MCF 10A (cell line): ENCODE measurements at regions of chr4 and their contacts with region 1.

Region 1: GRCh38 chr4:138870737-138871554 is 144.6 kb upstream of the NOCT start:
- DNase-seq: peak; percentile 81
- H3K4me3 Mint-ChIP-seq: no peak overlapping the region
- H3K27ac Mint-ChIP-seq: no peak overlapping the region
- H3K4me1 Mint-ChIP-seq: peaks cover 11% of the 10 kb centered on the region
- H3K27me3 Mint-ChIP-seq: no peaks in the 10 kb centered on the region
- CTCF ChIP-seq: peak; percentile 78

Region 2: DNA sequence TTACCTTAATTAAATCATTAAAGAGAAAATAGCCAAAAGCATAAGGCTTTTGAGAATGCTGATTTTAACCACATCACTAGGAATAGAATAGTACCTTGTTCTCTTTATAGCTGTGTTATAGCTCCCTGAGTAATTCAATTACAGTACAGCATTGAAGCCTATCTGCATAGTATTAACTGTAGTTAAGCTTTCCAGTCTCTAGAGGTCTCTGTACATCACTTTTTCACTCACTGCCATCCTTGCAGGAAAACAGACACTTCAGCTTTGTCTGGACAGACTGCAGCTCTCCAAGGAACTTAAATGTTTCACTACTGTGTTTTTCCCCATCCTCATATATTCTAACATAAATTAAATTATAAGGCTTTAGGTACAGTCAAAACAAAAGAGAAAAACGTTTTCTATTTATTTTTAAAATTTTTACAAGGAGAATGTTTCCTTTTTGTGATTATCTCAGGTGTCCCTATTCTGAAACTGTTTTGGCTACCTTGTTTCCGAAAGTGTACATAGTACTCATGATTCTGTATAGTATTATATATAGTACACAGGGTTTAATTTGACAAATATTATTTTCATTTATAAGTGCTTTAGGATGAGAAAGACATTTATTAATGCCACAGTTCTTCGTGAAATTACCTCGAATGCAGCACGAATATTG is 1746.5 kb before region 1 on chr4:
- CTCF ChIA-PET with region 1: interaction called, 5 read pairs
- POLR2A ChIA-PET with region 1: no interaction called
- intact Hi-C with region 1: loop called (anchors 1 kb)
- DNase-seq: peak; percentile 77
- H3K4me3 Mint-ChIP-seq: peak overlapping the region; percentile 72
- H3K27ac Mint-ChIP-seq: peak overlapping the region; percentile 41
- H3K4me1 Mint-ChIP-seq: peaks cover 5% of the 10 kb centered on the region
- H3K27me3 Mint-ChIP-seq: no peaks in the 10 kb centered on the region
- CTCF ChIP-seq: peak; percentile 60

Region 3: DNA sequence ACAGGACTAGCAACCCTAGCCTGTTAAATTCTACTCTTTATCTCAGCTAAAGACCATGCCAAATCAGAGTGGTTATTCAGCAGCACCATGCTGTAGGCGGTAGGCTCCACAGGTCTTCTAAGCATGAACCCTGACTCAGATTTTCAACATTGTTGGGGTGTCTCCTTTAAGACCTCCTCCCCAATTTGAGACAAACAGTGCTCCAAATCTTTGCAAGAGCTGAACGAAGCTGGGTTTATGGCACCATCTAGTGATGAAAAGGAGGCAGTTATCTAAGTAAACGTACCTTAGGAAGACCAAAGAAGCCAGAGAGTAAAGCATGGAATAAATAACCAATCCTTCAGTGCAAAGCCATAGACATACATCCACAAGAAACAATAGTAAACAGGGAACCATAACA is 294.3 kb before region 1 on chr4:
- CTCF ChIA-PET with region 1: interaction called, 5 read pairs
- POLR2A ChIA-PET with region 1: no interaction called
- intact Hi-C with region 1: loop called (anchors 2 kb)
- DNase-seq: peak; percentile 58
- H3K4me3 Mint-ChIP-seq: no peak overlapping the region
- H3K27ac Mint-ChIP-seq: no peak overlapping the region
- H3K4me1 Mint-ChIP-seq: no peaks in the 10 kb centered on the region
- H3K27me3 Mint-ChIP-seq: no peaks in the 10 kb centered on the region
- CTCF ChIP-seq: peak; percentile 51

Region 4: GRCh38 chr4:138910607-138911336 is 39.8 kb after region 1 on chr4:
- CTCF ChIA-PET with region 1: interaction called, 11 read pairs
- POLR2A ChIA-PET with region 1: no interaction called
- intact Hi-C with region 1: no loop called
- DNase-seq: peak; percentile 89
- H3K4me3 Mint-ChIP-seq: no peak overlapping the region
- H3K27ac Mint-ChIP-seq: peak overlapping the region; percentile 73
- H3K4me1 Mint-ChIP-seq: peaks cover 6% of the 10 kb centered on the region
- H3K27me3 Mint-ChIP-seq: no peaks in the 10 kb centered on the region
- CTCF ChIP-seq: no peak

Region 5: DNA sequence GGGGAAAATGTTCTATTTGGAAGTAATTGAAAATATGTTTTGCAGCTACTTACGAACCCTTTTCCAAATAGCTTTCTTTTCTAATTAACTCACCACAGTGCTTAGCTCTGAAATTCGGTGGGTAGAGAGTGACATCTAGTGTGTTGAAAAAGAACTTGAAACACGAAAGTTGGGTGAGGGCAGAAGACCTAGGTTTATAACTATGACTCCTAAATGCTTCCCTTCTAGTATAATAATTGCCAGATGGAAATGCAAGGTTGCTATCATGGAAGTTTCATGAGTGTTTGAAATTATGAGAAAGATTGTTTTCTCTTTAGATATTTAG is 67.4 kb after region 1 on chr4:
- CTCF ChIA-PET with region 1: interaction called, 18 read pairs
- POLR2A ChIA-PET with region 1: interaction called, 3 read pairs
- intact Hi-C with region 1: loop called (anchors 1 kb)
- DNase-seq: peak; percentile 58
- H3K4me3 Mint-ChIP-seq: no peak overlapping the region
- H3K27ac Mint-ChIP-seq: no peak overlapping the region
- H3K4me1 Mint-ChIP-seq: no peaks in the 10 kb centered on the region
- H3K27me3 Mint-ChIP-seq: no peaks in the 10 kb centered on the region
- CTCF ChIP-seq: peak; percentile 55